ENCODE measurements at regions of chrX and their contacts with region 1.

Region 1: GRCh38 chrX:136674270-136674985 is 26.5 kb downstream of the CD40LG start:
- DNase-seq: peak in 7 of 14 experiments; percentile 11 to 79 (median 45)
- ATAC-seq: peak; percentile 78
- H3K4me3 ChIP-seq: no peak overlapping the region
- H3K4me3 Mint-ChIP-seq: peak overlapping the region; percentile 89
- H3K27ac ChIP-seq: peak overlapping the region; percentile 29 to 61
- H3K27ac Mint-ChIP-seq: peak overlapping the region; percentile 95
- H3K4me1 ChIP-seq: peaks cover 60% of the 10 kb centered on the region
- H3K4me1 Mint-ChIP-seq: peaks cover 96% of the 10 kb centered on the region
- H3K27me3 ChIP-seq: no peaks in the 10 kb centered on the region
- H3K27me3 Mint-ChIP-seq: no peaks in the 10 kb centered on the region
- CTCF ChIP-seq: no peak

Region 2: DNA sequence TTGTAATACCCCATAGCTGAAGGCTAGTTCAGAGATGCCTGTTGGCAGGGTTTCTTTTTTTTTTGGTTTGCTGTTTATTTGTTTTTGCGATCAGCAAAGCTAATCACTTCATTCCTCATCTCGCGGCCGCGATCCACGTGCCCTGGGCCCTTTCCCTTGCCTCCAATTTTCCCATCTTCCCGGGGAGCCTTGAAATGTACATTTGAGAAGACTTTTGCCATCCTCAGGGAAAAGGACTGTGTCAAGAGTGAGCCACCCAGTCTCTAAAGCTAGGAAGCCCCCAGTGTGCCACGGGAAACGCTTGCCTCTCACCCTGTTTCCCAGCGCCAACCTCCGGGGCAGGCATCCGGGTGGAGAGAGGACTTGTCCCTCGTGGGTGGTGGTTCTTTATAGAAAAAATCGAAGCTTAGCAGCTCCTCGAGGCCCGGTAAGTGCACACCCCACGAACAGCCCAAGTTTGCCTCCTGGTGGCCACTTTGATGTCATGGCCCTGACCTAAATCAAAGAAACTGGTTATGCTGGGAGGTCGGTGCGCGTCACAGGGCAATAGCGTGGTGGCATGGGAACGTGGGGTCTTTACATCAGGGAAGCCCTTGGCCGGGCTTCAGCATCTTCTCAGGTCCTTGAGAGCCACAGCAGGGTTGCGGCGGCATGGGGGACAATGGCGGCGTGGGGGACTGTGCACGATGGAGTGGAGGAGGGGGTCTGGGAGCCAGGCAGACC is 465.3 kb before region 1 on chrX:
- CTCF ChIA-PET with region 1: no interaction called
- POLR2A ChIA-PET with region 1: no interaction called
- intact Hi-C with region 1: no loop called
- DNase-seq: peak in 13 of 14 experiments; percentile 6 to 73 (median 31)
- ATAC-seq: peak; percentile 62
- H3K4me3 ChIP-seq: no peak overlapping the region
- H3K4me3 Mint-ChIP-seq: no peak overlapping the region
- H3K27ac ChIP-seq: no peak overlapping the region
- H3K27ac Mint-ChIP-seq: no peak overlapping the region
- H3K4me1 ChIP-seq: peaks cover 32% of the 10 kb centered on the region
- H3K4me1 Mint-ChIP-seq: peaks cover 19% of the 10 kb centered on the region
- H3K27me3 ChIP-seq: no peaks in the 10 kb centered on the region
- H3K27me3 Mint-ChIP-seq: no peaks in the 10 kb centered on the region
- CTCF ChIP-seq: no peak

Region 3: DNA sequence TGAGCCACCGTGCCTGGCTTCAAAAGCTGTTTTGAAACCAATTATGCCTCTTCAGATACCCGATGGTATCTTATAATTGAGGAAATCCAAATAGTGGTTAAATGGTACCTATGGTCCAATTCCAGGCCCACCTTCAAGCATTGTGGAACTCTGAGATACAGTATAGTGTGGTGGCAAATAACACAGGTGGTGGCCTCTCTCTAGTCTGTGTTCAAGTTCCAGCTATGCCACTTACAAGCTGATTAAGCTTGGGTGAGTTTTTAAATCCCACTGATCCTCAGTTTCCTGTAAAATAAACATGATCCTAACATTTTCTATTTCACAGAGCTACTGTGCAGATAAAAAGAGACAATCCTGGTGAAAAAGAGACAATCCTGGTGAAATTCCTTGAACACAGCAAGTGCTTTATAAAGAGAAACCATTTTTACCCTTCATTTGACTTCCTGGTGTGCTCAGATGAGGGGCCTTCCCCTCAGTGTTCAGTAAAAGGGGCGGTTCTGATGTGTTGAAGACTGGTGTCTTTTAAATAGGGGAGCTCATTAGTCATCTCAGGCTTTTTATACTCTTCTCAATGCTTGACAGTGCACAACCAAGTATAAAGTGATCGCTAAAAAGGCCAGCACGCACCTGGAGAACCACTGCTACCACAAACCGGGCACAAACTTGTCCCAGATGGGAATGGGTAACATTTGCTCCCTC is 57.3 kb before region 1 on chrX:
- CTCF ChIA-PET with region 1: no interaction called
- POLR2A ChIA-PET with region 1: interaction called, 11 read pairs
- intact Hi-C with region 1: no loop called
- DNase-seq: peak in 5 of 14 experiments; percentile 14 to 72 (median 63)
- ATAC-seq: peak; percentile 85
- H3K4me3 ChIP-seq: no peak overlapping the region
- H3K4me3 Mint-ChIP-seq: peak overlapping the region; percentile 75
- H3K27ac ChIP-seq: peak overlapping the region; percentile 29 to 58
- H3K27ac Mint-ChIP-seq: peak overlapping the region; percentile 86
- H3K4me1 ChIP-seq: peaks cover 57% of the 10 kb centered on the region
- H3K4me1 Mint-ChIP-seq: peaks cover 64% of the 10 kb centered on the region
- H3K27me3 ChIP-seq: no peaks in the 10 kb centered on the region
- H3K27me3 Mint-ChIP-seq: no peaks in the 10 kb centered on the region
- CTCF ChIP-seq: no peak

Region 4: GRCh38 chrX:136626237-136626636 is 48.2 kb before region 1 on chrX:
- CTCF ChIA-PET with region 1: no interaction called
- POLR2A ChIA-PET with region 1: interaction called, 10 read pairs
- intact Hi-C with region 1: no loop called
- DNase-seq: no peak
- ATAC-seq: no peak
- H3K4me3 ChIP-seq: no peak overlapping the region
- H3K4me3 Mint-ChIP-seq: peak overlapping the region; percentile 31
- H3K27ac ChIP-seq: peak overlapping the region in 1 of 2 donors; percentile 62
- H3K27ac Mint-ChIP-seq: peak overlapping the region; percentile 69
- H3K4me1 ChIP-seq: peaks cover 66% of the 10 kb centered on the region
- H3K4me1 Mint-ChIP-seq: peaks cover 98% of the 10 kb centered on the region
- H3K27me3 ChIP-seq: no peaks in the 10 kb centered on the region
- H3K27me3 Mint-ChIP-seq: no peaks in the 10 kb centered on the region
- CTCF ChIP-seq: no peak

Region 5: GRCh38 chrX:136635235-136635634 is 39.2 kb before region 1 on chrX:
- CTCF ChIA-PET with region 1: no interaction called
- POLR2A ChIA-PET with region 1: interaction called, 14 read pairs
- intact Hi-C with region 1: loop called in 1 of 2 experiments (anchors 5 kb)
- DNase-seq: peak in 4 of 14 experiments; percentile 28 to 76 (median 70)
- ATAC-seq: peak; percentile 80
- H3K4me3 ChIP-seq: peak overlapping the region; percentile 27
- H3K4me3 Mint-ChIP-seq: peak overlapping the region; percentile 58
- H3K27ac ChIP-seq: peak overlapping the region; percentile 39 to 47
- H3K27ac Mint-ChIP-seq: peak overlapping the region; percentile 88
- H3K4me1 ChIP-seq: peaks cover 83% of the 10 kb centered on the region
- H3K4me1 Mint-ChIP-seq: peaks cover 88% of the 10 kb centered on the region
- H3K27me3 ChIP-seq: no peaks in the 10 kb centered on the region
- H3K27me3 Mint-ChIP-seq: no peaks in the 10 kb centered on the region
- CTCF ChIP-seq: no peak

Region 6: GRCh38 chrX:136652822-136653723 is 21.4 kb before region 1 on chrX:
- CTCF ChIA-PET with region 1: interaction called, 4 read pairs
- POLR2A ChIA-PET with region 1: interaction called, 72 read pairs
- intact Hi-C with region 1: no loop called
- DNase-seq: peak in 6 of 14 experiments; percentile 11 to 44 (median 29)
- ATAC-seq: peak; percentile 50
- H3K4me3 ChIP-seq: peak overlapping the region; percentile 80
- H3K4me3 Mint-ChIP-seq: peak overlapping the region; percentile 99
- H3K27ac ChIP-seq: peak overlapping the region; percentile 58 to 67
- H3K27ac Mint-ChIP-seq: peak overlapping the region; percentile 92
- H3K4me1 ChIP-seq: peaks cover 38% of the 10 kb centered on the region
- H3K4me1 Mint-ChIP-seq: peaks cover 69% of the 10 kb centered on the region
- H3K27me3 ChIP-seq: no peaks in the 10 kb centered on the region
- H3K27me3 Mint-ChIP-seq: no peaks in the 10 kb centered on the region
- CTCF ChIP-seq: no peak

Region 7: DNA sequence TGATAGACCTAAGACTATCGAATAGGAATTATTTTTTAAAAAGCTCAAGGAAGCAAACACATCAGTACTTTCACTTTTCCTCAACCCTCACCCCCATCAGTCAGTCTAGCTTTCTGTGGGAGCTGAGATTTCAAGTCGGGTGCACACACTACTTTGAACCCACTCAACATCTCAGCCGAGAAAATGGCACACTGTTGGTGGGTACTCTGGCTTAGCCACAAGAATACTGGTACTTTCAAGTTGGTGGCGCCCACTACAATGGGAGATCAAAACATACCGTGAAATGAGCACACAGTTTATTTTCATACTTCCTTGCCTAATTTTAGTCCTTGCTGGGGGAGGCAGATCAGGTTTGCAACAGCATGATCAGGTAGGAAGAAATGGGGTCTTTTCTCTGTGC is 16.3 kb before region 1 on chrX:
- CTCF ChIA-PET with region 1: interaction called, 3 read pairs
- POLR2A ChIA-PET with region 1: interaction called, 72 read pairs
- intact Hi-C with region 1: loop called in 1 of 2 experiments (anchors 1 kb)
- DNase-seq: peak in 5 of 14 experiments; percentile 16 to 50 (median 45)
- ATAC-seq: peak; percentile 10
- H3K4me3 ChIP-seq: peak overlapping the region; percentile 36
- H3K4me3 Mint-ChIP-seq: peak overlapping the region; percentile 99
- H3K27ac ChIP-seq: peak overlapping the region; percentile 74 to 75
- H3K27ac Mint-ChIP-seq: peak overlapping the region; percentile 92
- H3K4me1 ChIP-seq: peaks cover 76% of the 10 kb centered on the region
- H3K4me1 Mint-ChIP-seq: peaks cover 98% of the 10 kb centered on the region
- H3K27me3 ChIP-seq: no peaks in the 10 kb centered on the region
- H3K27me3 Mint-ChIP-seq: no peaks in the 10 kb centered on the region
- CTCF ChIP-seq: no peak

Region 8: GRCh38 chrX:136689436-136689835 is 15.0 kb after region 1 on chrX:
- CTCF ChIA-PET with region 1: interaction called, 3 read pairs
- POLR2A ChIA-PET with region 1: interaction called, 16 read pairs
- intact Hi-C with region 1: loop called (anchors 2 kb)
- DNase-seq: peak in 4 of 14 experiments; percentile 38 to 51 (median 42)
- ATAC-seq: peak; percentile 11
- H3K4me3 ChIP-seq: no peak overlapping the region
- H3K4me3 Mint-ChIP-seq: peak overlapping the region; percentile 27
- H3K27ac ChIP-seq: peak overlapping the region; percentile 67 to 75
- H3K27ac Mint-ChIP-seq: peak overlapping the region; percentile 95
- H3K4me1 ChIP-seq: peaks cover 62% of the 10 kb centered on the region
- H3K4me1 Mint-ChIP-seq: peaks cover 78% of the 10 kb centered on the region
- H3K27me3 ChIP-seq: no peaks in the 10 kb centered on the region
- H3K27me3 Mint-ChIP-seq: no peaks in the 10 kb centered on the region
- CTCF ChIP-seq: no peak